ENCODE measurements at regions of chr6 and their contacts with region 1.

Region 1: GRCh38 chr6:111709615-111710398 is 104.1 kb upstream of the TRAF3IP2 start:
- DNase-seq: peak; percentile 83
- ATAC-seq: peak; percentile 90

Region 2: DNA sequence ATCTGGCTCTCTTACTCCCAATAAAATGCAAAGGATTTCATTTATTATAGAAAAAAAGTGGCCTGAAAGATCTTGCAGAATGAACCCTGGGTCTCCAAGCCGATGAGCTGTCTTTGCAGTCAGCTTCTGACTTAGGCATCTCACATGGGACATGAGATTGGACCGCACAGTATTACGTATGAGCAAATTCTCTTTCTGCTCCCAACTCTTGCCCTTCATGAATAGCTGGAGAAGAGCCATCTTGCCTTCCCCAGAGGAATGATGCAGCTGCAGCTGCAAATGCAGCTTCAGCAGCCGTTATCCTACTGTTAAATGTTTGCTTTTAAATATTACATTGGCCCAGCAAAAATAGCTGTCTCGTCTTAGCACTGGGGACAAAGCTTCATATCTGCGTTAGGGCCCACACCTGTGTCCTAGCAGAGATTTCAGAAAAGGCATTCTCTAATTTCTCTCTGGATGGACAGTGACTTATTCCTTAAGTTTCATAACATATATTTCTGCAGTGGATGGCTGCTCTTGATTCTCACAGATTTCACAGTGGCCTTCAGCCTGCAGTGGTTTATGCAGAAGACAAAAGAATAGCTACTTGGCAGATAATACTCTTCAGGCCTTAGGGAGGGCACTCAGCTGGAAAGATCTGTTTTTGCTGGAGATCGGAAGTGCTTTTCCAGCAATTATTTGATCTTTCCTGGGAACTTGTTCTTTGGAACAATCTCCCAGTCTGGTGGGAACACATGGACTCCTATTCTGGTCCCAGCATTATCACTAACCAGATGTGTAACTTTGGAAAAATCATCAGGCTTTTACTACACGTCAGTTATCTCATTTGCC is 34.3 kb after region 1 on chr6:
- intact Hi-C with region 1: no loop called
- DNase-seq: peak; percentile 78
- ATAC-seq: peak; percentile 94

Region 3: GRCh38 chr6:111873178-111874024 is 163.6 kb after region 1 on chr6 and contains the start of gene FYN:
- intact Hi-C with region 1: loop called (anchors 10 kb)
- DNase-seq: peak; percentile 99
- ATAC-seq: peak; percentile 99
- total RNA-seq, gene FYN: 173 TPM

Region 4: DNA sequence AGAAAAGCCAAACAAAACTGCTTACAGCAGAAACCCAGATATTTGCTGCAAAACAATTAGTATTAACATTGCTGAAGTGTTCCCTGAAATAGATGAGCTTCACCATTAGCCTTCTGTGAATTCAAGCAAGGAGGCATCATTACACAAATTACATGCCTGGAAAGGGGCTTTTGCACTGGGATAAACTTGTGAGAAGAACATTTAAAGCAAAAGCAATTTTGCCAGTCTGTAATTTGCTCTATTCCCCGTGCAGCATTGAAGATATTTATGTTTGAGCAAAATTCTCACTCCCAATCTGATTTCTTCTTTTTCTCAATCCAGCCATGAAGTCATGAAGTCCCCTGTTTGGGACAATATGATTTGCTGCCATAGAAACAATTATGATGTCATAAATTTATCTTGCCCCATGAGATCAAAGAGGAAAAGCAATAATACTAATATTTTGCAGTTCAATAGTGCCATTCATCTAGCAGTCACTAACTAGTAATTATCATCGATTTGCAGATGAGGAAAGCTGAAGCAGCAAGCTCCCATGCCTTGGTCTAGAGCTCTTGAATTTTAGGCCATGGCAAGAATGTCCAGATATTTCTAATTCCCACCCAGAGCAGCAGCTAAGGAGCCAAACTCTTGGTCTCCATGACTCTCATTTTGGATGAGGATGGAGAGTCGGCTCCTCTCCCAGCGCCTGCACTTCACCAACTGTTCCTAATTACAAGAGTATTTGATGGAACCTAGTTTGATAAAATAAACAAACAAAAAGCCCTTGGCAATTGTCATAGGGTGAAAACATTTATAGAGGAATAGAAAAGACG is 294.6 kb after region 1 on chr6:
- intact Hi-C with region 1: loop called (anchors 5 kb)
- DNase-seq: no peak
- ATAC-seq: peak; percentile 76

Region 5: GRCh38 chr6:112043032-112044007 is 333.5 kb after region 1 on chr6:
- intact Hi-C with region 1: loop called (anchors 10 kb)
- DNase-seq: peak; percentile 95
- ATAC-seq: peak; percentile 96

Measured in sciatic nerve (tissue), 2 donors.